ENCODE measurements at regions of chr15 and their contacts with region 1.

Region 1: DNA sequence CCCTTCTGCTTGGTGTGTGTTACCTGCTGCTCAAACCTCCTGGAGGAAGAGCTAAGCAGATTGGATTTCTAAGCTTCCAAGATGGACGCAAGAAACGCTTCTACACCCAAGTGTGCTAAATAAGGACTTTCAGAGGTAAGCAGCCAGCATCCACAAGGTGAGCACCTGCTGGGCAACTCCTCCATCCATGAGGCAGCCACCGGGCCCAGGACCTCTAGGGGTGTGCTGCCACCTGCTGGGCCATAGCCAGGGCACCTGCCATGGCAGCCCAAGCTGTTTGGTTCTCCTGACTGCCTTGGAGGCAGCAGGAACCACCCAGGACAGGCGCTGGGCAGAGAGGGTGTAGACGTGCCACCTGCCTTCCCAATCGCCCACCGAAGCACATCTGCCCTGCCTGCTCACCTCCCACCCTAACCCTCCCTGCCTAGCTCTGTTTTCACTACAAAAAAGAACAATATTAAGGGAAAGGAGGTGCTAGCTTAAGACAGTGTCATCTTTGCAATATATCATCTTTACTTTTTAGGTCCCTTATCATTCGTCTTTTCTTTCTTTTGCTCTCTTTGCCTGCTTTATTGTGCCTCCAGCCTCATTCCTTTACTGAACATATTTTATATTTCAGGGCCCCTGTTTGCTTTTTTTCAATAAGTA is 12.9 kb downstream of the C15orf62 start:
- DNase-seq: peak; percentile 85
- H3K4me3 Mint-ChIP-seq: no peak overlapping the region
- H3K27ac Mint-ChIP-seq: peak overlapping the region; percentile 33
- H3K4me1 Mint-ChIP-seq: no peaks in the 10 kb centered on the region
- H3K27me3 Mint-ChIP-seq: no peaks in the 10 kb centered on the region
- CTCF ChIP-seq: peak; percentile 46

Region 2: DNA sequence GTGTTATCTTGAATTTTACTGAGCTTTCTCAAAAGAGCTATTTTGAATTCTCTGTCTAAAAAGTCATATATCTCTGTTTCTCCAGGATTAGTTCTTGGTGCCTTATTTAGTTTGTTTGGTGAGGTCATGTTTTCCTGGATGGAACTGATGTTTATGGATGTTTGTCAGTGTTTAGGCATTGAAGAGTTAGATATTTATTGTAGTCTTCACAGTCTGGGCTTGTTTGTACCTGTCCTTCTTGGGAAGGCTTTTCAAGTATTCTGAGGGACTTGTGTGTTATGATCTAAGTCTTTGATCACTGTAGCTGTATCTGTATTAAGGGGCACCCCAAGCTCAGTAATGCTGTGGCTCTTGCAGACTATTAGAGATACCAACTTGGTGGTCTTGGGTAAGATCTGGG is 98.3 kb before region 1 on chr15:
- CTCF ChIA-PET with region 1: no interaction called
- intact Hi-C with region 1: loop called (anchors 10 kb)
- DNase-seq: no peak
- H3K4me3 Mint-ChIP-seq: no peak overlapping the region
- H3K27ac Mint-ChIP-seq: no peak overlapping the region
- H3K4me1 Mint-ChIP-seq: no peaks in the 10 kb centered on the region
- H3K27me3 Mint-ChIP-seq: no peaks in the 10 kb centered on the region
- CTCF ChIP-seq: no peak

Region 3: DNA sequence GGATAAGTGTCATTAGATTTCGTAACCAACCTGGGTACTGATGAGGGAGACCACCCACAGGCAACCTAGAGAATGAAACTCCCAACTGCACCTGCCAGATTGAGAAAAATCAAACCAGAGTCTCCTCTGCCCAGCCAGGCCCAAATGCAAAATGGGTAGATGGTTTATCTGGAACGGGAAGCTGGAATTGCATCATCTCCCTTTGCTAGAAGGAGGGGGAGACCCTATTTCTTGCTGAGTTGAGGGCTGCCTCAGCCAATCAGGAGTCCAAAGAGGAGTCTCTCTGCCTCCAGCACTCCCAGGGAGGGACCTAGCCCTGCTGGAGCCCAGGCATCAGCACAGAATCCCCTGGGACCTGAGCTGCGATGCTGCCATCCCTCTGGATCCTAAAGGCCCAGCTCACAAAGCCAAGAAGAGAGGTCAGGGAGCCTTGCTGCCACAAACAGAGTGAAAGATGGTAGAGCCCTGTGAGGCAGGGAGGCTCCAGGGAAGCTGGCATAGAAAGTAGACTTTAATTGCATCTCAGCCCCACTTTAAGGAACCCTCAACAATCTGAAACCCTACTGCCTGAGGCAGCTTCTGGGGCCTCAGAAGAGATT is 35.7 kb before region 1 on chr15:
- CTCF ChIA-PET with region 1: interaction called, 15 read pairs
- intact Hi-C with region 1: no loop called
- DNase-seq: no peak
- H3K4me3 Mint-ChIP-seq: no peak overlapping the region
- H3K27ac Mint-ChIP-seq: no peak overlapping the region
- H3K4me1 Mint-ChIP-seq: no peaks in the 10 kb centered on the region
- H3K27me3 Mint-ChIP-seq: no peaks in the 10 kb centered on the region
- CTCF ChIP-seq: no peak

Region 4: DNA sequence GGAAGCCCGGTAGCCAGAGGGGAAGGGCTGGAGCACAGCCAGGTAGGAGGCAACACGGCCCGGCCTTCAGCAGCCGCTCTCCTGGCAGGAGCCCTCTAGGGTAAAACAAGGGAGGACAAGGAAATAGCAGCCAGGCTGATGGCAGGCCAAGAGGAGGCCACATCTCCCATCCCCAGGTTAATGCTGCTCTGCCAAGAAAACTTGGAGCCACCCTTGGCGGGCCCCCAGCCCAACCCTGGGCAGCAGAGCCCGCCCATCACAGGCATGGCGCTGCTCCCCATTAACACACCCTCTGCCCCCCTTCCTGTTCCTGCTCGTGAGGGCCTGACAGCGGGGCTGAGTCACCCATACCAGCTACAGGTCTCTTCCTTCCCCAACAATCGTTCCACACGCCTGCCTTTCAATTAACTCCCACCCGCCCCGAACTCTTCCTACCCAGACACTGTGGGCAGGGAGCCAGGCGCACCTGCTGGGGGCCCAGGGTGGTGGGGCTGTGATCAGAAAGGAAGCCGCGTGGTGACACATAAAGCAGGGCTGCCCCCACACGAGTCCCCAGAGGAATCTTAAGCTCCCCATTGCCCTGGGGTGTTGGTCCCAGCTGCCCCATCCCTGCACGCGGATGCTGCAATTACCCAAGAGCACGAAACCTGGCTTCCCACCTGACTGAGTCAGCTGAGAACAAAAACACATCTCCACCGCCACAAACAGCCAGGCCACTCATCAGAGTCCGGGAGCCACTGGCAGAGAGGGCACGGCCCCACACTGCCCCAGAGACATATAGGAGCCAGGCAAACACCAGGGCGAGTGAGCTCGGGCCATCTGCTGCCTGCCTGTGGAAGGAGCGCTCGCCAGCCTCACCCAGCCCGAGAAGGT is 13.2 kb before region 1 on chr15 and contains the start of gene C15orf62:
- CTCF ChIA-PET with region 1: interaction called, 8 read pairs
- intact Hi-C with region 1: loop called (anchors 2 kb)
- DNase-seq: peak; percentile 74
- H3K4me3 Mint-ChIP-seq: peak within 1 kb of the TSS; percentile 59
- H3K27ac Mint-ChIP-seq: peak within 1 kb of the TSS; percentile 90
- H3K4me1 Mint-ChIP-seq: peaks cover 22% of the 10 kb centered on the region
- H3K27me3 Mint-ChIP-seq: no peaks in the 10 kb centered on the region
- CTCF ChIP-seq: no peak
- total RNA-seq, gene C15orf62: 0.56 and 0.64 TPM in 2 replicates

Region 5: GRCh38 chr15:40847205-40847961 is 64.7 kb after region 1 on chr15:
- CTCF ChIA-PET with region 1: interaction called, 4 read pairs
- intact Hi-C with region 1: loop called (anchors 5 kb)
- DNase-seq: peak; percentile 64
- H3K4me3 Mint-ChIP-seq: peak overlapping the region; percentile 79
- H3K27ac Mint-ChIP-seq: peak overlapping the region; percentile 70
- H3K4me1 Mint-ChIP-seq: peaks cover 16% of the 10 kb centered on the region
- H3K27me3 Mint-ChIP-seq: no peaks in the 10 kb centered on the region
- CTCF ChIP-seq: no peak

Region 6: DNA sequence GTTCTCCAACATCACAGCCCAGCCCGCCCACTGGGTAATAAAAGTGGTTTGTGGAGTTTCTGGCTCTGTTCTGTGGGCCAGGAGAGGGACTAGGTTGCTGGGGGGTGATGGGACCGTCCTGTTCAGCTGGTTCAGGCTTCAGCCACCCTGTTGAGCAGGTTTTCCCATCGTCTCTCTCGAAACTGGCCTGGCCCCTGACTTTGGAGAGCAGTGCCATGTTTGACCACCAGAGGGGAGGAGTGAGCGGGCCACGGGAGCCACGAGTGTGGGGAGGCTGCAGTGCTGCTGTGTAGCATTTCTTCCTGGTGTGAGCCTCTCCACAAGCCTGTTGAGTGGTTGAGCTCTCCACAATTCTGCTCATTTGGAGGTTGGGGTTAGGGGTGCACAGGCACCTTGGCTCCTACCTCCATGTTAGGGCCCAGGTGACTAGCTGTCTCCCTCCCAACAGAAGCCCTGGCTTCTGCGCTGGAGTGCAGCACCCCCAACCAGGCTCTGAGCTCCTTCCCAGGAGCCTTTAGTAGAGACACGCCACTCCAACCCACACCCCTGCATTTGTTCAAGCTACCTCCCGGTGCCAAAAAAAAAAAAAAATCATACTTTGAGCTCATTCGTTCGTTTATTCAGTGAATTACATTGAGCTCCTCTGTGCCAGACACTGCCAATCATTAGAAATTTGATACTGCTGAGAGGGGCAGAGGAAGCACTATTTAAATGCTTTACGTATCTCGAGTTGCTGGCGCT is 75.1 kb after region 1 on chr15:
- CTCF ChIA-PET with region 1: interaction called, 22 read pairs
- intact Hi-C with region 1: no loop called
- DNase-seq: peak; percentile 90
- H3K4me3 Mint-ChIP-seq: no peak overlapping the region
- H3K27ac Mint-ChIP-seq: peak overlapping the region; percentile 44
- H3K4me1 Mint-ChIP-seq: peaks cover 12% of the 10 kb centered on the region
- H3K27me3 Mint-ChIP-seq: no peaks in the 10 kb centered on the region
- CTCF ChIP-seq: peak; percentile 63